Activated CD8-positive, alpha-beta T cell treated with anti-CD3 and anti-CD28 coated beads, Interleukin-2, amount 10 ng/mL, durations not matched to agents 7 days and 5 days (primary cell): ENCODE measurements at regions of chr6 and their contacts with region 1.

Region 1: GRCh38 chr6:30556066-30556905 is at the start of gene GNL1:
- DNase-seq: peak; percentile 99
- ATAC-seq: peak; percentile 90
- H3K4me3 Mint-ChIP-seq: peak within 1 kb of the TSS; percentile 96
- H3K27ac Mint-ChIP-seq: peak within 1 kb of the TSS; percentile 96
- H3K4me1 Mint-ChIP-seq: peaks cover 30% of the 10 kb centered on the region
- H3K27me3 Mint-ChIP-seq: no peaks in the 10 kb centered on the region
- total RNA-seq, gene GNL1: 63.7 to 69.9 TPM

Region 2: DNA sequence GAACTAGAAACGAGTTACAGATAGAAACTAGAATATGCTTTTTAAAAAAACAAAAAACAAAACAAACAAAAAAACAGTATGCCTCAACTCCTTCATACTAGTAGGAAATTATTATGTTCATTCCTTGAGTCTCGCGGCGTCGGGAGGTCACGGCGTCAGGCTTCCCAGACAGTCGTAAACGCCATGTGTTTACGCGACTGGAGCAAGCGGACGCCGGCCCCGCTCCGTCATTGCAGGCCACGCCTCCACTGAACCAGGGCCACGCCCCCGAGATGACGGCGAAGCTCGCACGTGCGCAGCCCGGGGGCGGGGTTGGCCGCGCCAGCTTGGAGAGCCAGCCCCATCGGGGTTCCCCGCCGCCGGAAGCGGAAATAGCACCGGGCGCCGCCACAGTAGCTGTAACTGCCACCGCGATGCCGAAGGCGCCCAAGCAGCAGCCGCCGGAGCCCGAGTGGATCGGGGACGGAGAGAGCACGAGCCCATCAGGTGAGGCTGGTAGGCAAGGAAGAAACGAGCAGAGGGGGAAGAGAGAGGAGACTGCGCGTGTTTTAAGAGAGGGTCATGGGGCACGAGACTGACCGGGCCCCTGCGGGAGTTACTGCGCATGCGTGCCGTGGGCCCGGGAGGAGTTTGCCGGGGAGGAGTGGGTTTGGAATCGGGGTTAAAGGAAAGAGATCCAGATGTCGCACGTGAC is 14.9 kb after region 1 on chr6 and contains the start of gene ABCF1:
- CTCF ChIA-PET with region 1: interaction called, 7 read pairs
- POLR2A ChIA-PET with region 1: interaction called, 46 read pairs
- DNase-seq: peak; percentile 99
- ATAC-seq: peak; percentile 96
- H3K4me3 Mint-ChIP-seq: peak within 1 kb of the TSS; percentile 96
- H3K27ac Mint-ChIP-seq: peak within 1 kb of the TSS; percentile 98
- H3K4me1 Mint-ChIP-seq: peaks cover 54% of the 10 kb centered on the region
- H3K27me3 Mint-ChIP-seq: peaks cover 2% of the 10 kb centered on the region
- total RNA-seq, gene ABCF1: 72.2 to 79.6 TPM

Region 3: GRCh38 chr6:30707281-30707872 is 151.1 kb after region 1 on chr6:
- CTCF ChIA-PET with region 1: no interaction called
- POLR2A ChIA-PET with region 1: no interaction called
- DNase-seq: no peak
- ATAC-seq: no peak
- H3K4me3 Mint-ChIP-seq: no peak overlapping the region
- H3K27ac Mint-ChIP-seq: no peak overlapping the region
- H3K4me1 Mint-ChIP-seq: peaks cover 22% of the 10 kb centered on the region
- H3K27me3 Mint-ChIP-seq: no peaks in the 10 kb centered on the region